ENCODE measurements at regions of chr2 and their contacts with region 1.

Region 1: DNA sequence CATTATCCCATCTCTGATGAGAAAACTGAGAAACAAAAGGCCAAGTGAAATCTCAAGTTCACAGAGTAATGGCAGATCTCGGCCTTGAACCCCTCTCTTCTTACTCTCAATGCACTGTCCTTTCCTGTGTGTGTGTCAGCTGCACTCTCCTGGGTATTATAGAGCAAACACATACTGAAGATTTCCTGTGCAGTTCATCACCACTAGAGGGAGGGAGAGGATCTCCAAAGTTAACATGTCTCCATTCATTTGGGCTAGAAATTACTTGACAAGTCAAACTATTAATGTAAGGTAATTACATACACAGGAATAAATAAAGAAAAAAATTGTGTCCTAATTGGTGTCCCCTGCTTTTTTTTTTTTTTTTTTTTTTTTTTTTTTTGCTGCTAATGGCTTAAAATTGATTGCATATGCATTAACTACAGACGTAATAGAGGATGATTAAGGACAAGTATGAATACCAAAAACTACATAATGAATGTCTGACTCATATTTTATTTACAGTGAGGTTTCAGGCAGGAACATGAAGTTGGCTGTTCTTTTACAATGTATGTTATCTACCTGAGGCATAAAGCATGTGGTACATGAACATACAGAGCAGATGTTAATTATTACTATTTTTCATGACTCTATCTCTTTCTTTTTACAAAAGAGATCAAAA is 269.2 kb downstream of the NYAP2 start:
- DNase-seq: peak in 1 of 2 experiments; percentile 33
- H3K4me3 ChIP-seq: no peak overlapping the region
- H3K4me3 Mint-ChIP-seq: no peak overlapping the region
- H3K27ac Mint-ChIP-seq: no peak overlapping the region
- H3K4me1 ChIP-seq: no peaks in the 10 kb centered on the region
- H3K4me1 Mint-ChIP-seq: no peaks in the 10 kb centered on the region
- H3K27me3 ChIP-seq: no peaks in the 10 kb centered on the region
- H3K27me3 Mint-ChIP-seq: peaks cover 6% of the 10 kb centered on the region
- CTCF ChIP-seq: peak; percentile 37 to 64

Region 2: GRCh38 chr2:225797394-225797793 is 128.7 kb after region 1 on chr2:
- CTCF ChIA-PET with region 1: interaction called, 3 read pairs
- POLR2A ChIA-PET with region 1: no interaction called
- intact Hi-C with region 1: loop called (anchors 5 kb)
- DNase-seq: no peak
- H3K4me3 ChIP-seq: no peak overlapping the region
- H3K4me3 Mint-ChIP-seq: no peak overlapping the region
- H3K27ac Mint-ChIP-seq: no peak overlapping the region
- H3K4me1 ChIP-seq: no peaks in the 10 kb centered on the region
- H3K4me1 Mint-ChIP-seq: no peaks in the 10 kb centered on the region
- H3K27me3 ChIP-seq: no peaks in the 10 kb centered on the region; the same call in 1 of the 2 replicates
- H3K27me3 Mint-ChIP-seq: peaks cover 2% of the 10 kb centered on the region
- CTCF ChIP-seq: no peak